OCI-LY7 (cell line): ENCODE measurements at regions of chr10 and their contacts with region 1.

Region 1: GRCh38 chr10:85318809-85319807 is 990.7 kb downstream of the CCSER2 start:
- DNase-seq: no peak
- H3K4me3 ChIP-seq: no peak overlapping the region
- H3K27ac ChIP-seq: no peak overlapping the region
- H3K4me1 ChIP-seq: no peaks in the 10 kb centered on the region
- CTCF ChIP-seq: no peak

Region 2: GRCh38 chr10:85256481-85256880 is 62.6 kb before region 1 on chr10:
- CTCF ChIA-PET with region 1: interaction called, 11 read pairs
- POLR2A ChIA-PET with region 1: no interaction called
- intact Hi-C with region 1: no loop called
- DNase-seq: no peak
- H3K4me3 ChIP-seq: no peak overlapping the region
- H3K27ac ChIP-seq: no peak overlapping the region
- H3K4me1 ChIP-seq: no peaks in the 10 kb centered on the region
- CTCF ChIP-seq: no peak